ENCODE measurements at regions of chr13 and their contacts with region 1.

Region 1: DNA sequence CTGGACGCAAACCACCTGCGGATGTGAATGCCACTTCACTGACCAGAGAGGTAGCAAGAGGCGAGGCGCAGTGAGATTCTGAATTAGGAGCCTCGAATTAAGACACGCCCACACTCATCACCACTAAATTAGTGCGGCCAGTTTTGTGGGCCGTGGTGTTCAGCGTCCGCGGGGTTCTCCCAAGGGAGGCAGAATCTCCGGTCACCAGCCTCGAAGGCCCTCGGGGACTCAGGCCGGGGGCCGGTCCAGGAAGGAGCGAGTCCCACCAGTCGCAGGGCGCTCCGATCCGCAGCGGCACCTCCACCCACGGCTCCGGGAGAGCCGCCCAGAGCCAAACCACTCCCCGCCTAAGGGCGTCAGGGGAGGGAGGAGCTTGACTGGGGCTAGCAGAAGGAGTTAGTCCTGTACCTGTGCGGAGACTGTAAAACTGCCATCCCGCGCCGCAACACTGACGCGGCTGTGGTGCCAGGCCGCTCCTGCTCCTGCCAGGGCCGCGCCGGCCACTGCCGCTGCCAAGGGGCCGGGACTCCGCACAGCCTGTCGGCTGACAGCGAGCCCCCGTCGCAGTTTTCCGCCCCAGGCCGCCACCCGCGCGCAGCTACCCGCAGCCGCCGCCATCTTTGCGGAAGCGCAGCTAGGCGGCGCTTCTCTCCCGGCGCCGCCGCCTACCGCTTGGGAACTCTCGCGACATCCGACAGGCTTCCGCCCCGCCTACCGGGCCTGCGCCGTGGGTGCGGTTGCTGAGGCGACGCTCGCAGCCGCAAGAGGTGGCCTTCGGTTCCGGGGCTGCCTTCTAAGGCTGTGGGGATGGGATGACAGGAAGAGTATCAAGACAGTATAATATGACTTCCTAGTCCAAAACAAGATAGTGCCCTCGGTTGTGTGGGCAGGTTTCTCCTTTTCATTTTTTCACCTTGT is at the start of gene MICU2:
- DNase-seq: peak; percentile 92 to 98 (median 96)
- ATAC-seq: peak; percentile 95
- H3K4me3 ChIP-seq: peak within 1 kb of the TSS; percentile 66
- H3K4me3 Mint-ChIP-seq: peak within 1 kb of the TSS; percentile 77 to 94 (median 88)
- H3K27ac ChIP-seq: peak within 1 kb of the TSS; percentile 93
- H3K27ac Mint-ChIP-seq: peak within 1 kb of the TSS; percentile 91 to 97 (median 95)
- H3K4me1 ChIP-seq: peaks cover 16 to 27% of the 10 kb centered on the region in 2 donors
- H3K4me1 Mint-ChIP-seq: peaks cover 25 to 53% (median 49%) of the 10 kb centered on the region in 7 donors
- H3K27me3 ChIP-seq: no peaks in the 10 kb centered on the region
- H3K27me3 Mint-ChIP-seq: peaks cover 0 to 21% (median 7%) of the 10 kb centered on the region in 5 donors
- total RNA-seq, gene MICU2: 32.5 to 45.6 (median 37.5) TPM

Region 2: DNA sequence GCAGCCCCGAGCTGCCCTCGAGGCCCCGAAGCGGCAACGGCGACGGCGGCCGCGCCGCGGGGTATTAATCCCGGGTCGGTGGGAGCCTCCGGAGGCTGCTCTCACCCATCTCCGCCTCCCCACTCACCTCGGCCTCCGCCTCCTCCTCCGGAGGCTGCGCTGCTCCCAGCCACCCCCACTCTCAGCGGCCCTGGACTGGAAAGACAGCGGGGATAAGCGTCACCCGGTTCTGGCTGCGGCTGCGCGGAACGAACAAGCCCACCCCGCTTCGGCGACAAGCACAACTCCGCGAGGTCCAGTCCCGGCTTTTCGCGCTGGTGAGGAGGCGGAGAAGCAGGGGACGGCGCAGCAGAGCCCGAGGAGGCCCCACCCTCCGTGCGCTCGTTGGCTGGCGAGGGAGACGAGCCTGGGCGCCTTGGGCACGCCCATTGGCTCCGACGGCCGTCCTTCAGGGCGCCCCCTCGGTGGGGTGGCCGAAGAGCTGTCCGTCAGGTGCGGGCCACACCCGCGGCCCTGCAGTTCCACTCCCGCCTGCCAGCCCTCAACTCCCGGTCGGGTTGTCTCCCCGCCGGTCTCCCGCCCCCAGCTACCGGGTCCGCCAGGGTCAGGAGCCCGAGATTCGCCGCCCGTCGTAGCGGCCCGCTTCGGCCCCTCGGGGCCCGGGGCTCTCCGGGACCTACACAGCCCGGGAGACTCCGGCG is 1740.3 kb before region 1 on chr13 and contains the start of gene ZMYM5:
- CTCF ChIA-PET with region 1: no interaction called
- POLR2A ChIA-PET with region 1: interaction called, 7 read pairs
- intact Hi-C with region 1: loop called (anchors 5 kb)
- DNase-seq: peak; percentile 87 to 96 (median 90)
- ATAC-seq: peak; percentile 89
- H3K4me3 ChIP-seq: peak within 1 kb of the TSS; percentile 80
- H3K4me3 Mint-ChIP-seq: peak within 1 kb of the TSS; percentile 85 to 98 (median 97)
- H3K27ac ChIP-seq: peak within 1 kb of the TSS; percentile 84
- H3K27ac Mint-ChIP-seq: peak within 1 kb of the TSS; percentile 90 to 98 (median 97)
- H3K4me1 ChIP-seq: peaks cover 22 to 23% of the 10 kb centered on the region in 2 donors
- H3K4me1 Mint-ChIP-seq: peaks cover 12 to 43% (median 37%) of the 10 kb centered on the region in 7 donors
- H3K27me3 ChIP-seq: no peaks in the 10 kb centered on the region
- H3K27me3 Mint-ChIP-seq: no peaks in the 10 kb centered on the region
- total RNA-seq, gene ZMYM5: 17.5 to 25.6 (median 24.7) TPM

Region 3: DNA sequence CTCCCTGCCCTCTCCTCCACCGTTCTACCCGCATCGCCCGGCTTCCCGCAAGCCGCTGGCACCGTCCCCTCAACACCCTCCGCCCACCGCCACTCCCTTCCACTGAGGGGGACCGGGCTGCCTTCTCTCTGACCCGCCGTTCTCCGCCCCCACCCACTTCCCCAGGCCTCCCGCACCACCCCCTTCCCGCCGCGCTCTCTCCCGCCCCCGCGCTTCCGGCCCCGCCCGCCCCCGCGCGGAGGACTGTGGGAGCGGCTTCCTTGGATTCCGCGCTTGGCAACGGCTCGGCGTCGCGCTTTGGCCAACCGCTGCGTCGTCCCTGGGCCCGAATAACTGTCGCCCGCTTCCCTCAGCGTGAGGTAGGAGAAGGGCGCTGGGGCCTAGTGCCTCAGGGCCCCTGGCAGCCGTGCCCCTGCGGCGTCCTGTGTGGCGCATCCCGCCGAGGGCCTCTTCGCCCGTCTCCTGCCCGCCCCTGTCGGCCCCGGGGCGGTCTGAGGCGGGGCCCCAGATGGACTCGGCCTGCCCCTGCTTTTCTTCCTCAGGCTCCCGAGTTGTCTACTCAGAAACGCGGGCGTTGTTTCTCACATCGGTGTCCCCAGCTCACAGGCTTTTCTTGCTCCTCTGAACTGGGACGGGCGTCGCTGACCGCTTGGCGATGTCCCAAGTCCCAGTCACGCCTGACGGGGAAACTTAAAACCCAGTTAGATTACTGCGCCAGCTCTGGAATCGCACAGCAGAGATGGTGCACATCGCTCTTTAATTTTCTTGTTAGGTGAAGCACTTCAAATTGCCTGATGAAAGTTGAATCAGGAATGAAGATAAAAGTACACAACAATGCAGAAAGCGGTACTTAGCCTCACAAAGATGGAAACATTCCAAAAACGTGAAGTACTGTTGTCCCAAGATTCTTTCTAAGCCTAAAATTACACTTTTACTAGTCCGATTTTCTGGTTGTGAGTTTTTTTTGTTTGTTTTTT is 1036.6 kb before region 1 on chr13 and contains the start of gene IFT88:
- CTCF ChIA-PET with region 1: no interaction called
- POLR2A ChIA-PET with region 1: no interaction called
- intact Hi-C with region 1: loop called in 1 of 2 experiments (anchors 1 kb)
- DNase-seq: peak; percentile 72 to 87 (median 80)
- ATAC-seq: peak; percentile 94
- H3K4me3 ChIP-seq: peak within 1 kb of the TSS; percentile 52
- H3K4me3 Mint-ChIP-seq: peak within 1 kb of the TSS; percentile 88 to 97 (median 93)
- H3K27ac ChIP-seq: peak within 1 kb of the TSS; percentile 73
- H3K27ac Mint-ChIP-seq: peak within 1 kb of the TSS; percentile 92 to 94 (median 93)
- H3K4me1 ChIP-seq: peaks cover 0 to 8% of the 10 kb centered on the region in 2 donors
- H3K4me1 Mint-ChIP-seq: peaks cover 7 to 18% (median 17%) of the 10 kb centered on the region in 7 donors
- H3K27me3 ChIP-seq: no peaks in the 10 kb centered on the region
- H3K27me3 Mint-ChIP-seq: no peaks in the 10 kb centered on the region
- total RNA-seq, gene IFT88: 5.0 to 17.0 (median 11.7) TPM

Region 4: DNA sequence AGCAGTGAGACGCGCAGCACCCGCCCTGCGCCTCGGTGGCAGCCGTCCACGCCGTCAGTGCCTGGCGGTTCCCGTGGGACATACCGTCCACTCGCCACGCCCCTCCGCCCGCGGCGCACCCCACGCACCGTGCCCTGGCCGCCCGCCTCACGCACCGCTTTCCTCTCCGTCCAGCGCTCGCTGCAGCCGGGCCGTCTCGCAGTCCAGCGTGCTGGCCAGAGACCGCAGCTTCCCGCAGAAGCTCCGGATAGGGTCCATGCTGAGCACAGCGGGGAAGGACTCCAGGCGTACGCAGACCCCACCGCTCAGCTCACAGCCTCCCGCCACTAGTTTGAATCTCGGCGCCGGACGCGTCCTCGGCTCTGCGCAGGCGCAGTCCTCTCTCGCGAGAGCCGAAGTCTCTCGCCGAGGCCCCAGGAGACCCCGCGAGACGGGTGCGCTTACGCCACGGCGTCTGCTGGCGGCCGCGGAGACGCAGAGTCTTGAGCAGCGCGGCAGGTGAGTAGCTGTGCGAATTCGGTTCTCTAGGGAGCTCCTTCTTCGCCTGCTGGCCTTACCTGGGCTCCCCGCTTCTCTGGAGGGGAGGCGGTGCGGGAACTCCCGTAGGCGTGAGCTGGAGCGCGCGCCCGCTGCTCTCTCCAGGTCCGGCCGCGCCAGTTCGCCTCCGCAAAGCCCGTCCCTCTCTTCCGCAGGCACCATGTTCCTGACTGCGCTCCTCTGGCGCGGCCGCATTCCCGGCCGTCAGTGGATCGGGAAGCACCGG is 427.4 kb before region 1 on chr13 and contains the starts of genes MRPL57 and SKA3:
- CTCF ChIA-PET with region 1: no interaction called
- POLR2A ChIA-PET with region 1: interaction called, 22 read pairs
- intact Hi-C with region 1: loop called (anchors 1 kb)
- DNase-seq: peak; percentile 90 to 97 (median 94)
- ATAC-seq: peak; percentile 97
- H3K4me3 ChIP-seq: peak within 1 kb of the TSS; percentile 86
- H3K4me3 Mint-ChIP-seq: peak within 1 kb of the TSS; percentile 95 to 99 (median 97)
- H3K27ac ChIP-seq: peak within 1 kb of the TSS; percentile 95
- H3K27ac Mint-ChIP-seq: peak within 1 kb of the TSS; percentile 80 to 97 (median 95)
- H3K4me1 ChIP-seq: peaks cover 10 to 16% of the 10 kb centered on the region in 2 donors
- H3K4me1 Mint-ChIP-seq: peaks cover 13 to 31% (median 22%) of the 10 kb centered on the region in 7 donors
- H3K27me3 ChIP-seq: no peaks in the 10 kb centered on the region
- H3K27me3 Mint-ChIP-seq: no peaks in the 10 kb centered on the region
- total RNA-seq, gene MRPL57: 10.6 to 22.8 (median 19.8) TPM
- total RNA-seq, gene SKA3: 0.46 to 35.0 (median 1.6) TPM in 4 of 5 experiments, not detected in the other

Region 5: GRCh38 chr13:21557995-21558394 is 45.8 kb before region 1 on chr13:
- CTCF ChIA-PET with region 1: no interaction called
- POLR2A ChIA-PET with region 1: interaction called, 3 read pairs
- intact Hi-C with region 1: loop called in 1 of 2 experiments (anchors 5 kb)
- DNase-seq: peak in 1 of 9 donors; percentile 11
- ATAC-seq: no peak
- H3K4me3 ChIP-seq: no peak overlapping the region
- H3K4me3 Mint-ChIP-seq: no peak overlapping the region
- H3K27ac ChIP-seq: no peak overlapping the region
- H3K27ac Mint-ChIP-seq: peak overlapping the region in 1 of 9 donors; percentile 43
- H3K4me1 ChIP-seq: no peaks in the 10 kb centered on the region
- H3K4me1 Mint-ChIP-seq: peaks cover 0 to 32% (median 20%) of the 10 kb centered on the region in 7 donors
- H3K27me3 ChIP-seq: no peaks in the 10 kb centered on the region
- H3K27me3 Mint-ChIP-seq: no peaks in the 10 kb centered on the region

Region 6: GRCh38 chr13:22061351-22061805 is 457.6 kb after region 1 on chr13:
- CTCF ChIA-PET with region 1: no interaction called
- POLR2A ChIA-PET with region 1: interaction called, 6 read pairs
- intact Hi-C with region 1: loop called in 1 of 2 experiments (anchors 1 kb)
- DNase-seq: peak; percentile 19 to 74 (median 58)
- ATAC-seq: peak; percentile 76
- H3K4me3 ChIP-seq: peak overlapping the region; percentile 29
- H3K4me3 Mint-ChIP-seq: peak overlapping the region; percentile 39 to 83 (median 60)
- H3K27ac ChIP-seq: peak overlapping the region; percentile 81
- H3K27ac Mint-ChIP-seq: peak overlapping the region; percentile 94 to 100 (median 98)
- H3K4me1 ChIP-seq: peaks cover 57 to 70% of the 10 kb centered on the region in 2 donors
- H3K4me1 Mint-ChIP-seq: peaks cover 50 to 89% (median 83%) of the 10 kb centered on the region in 7 donors
- H3K27me3 ChIP-seq: no peaks in the 10 kb centered on the region
- H3K27me3 Mint-ChIP-seq: no peaks in the 10 kb centered on the region

Measured in naive thymus-derived CD4-positive, alpha-beta T cell (primary cell).